Heart right ventricle (tissue), 16 donors: ENCODE measurements at regions of chr11 and their contacts with region 1.

Region 1: DNA sequence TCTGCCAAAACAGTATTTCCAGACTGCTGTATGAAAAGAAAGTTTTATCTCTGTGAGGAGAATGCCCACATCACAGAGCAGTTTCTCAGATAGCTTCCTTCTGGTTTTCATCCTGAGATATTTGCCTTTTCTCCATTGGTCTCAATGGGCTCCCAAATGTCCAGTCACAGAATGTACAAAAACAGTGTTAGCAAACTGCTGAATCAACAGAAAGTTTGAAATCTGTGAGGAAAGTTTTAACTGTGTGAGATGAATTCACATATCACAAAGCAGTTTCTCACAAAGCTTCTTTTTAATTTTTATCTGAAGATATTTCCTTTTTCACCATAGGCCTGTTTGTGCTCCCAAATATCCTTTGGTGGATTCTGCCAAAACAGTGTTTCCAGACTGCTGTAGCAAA is 207.2 kb upstream of the TRIM48 start:
- DNase-seq: no peak
- ATAC-seq: no peak
- H3K4me3 ChIP-seq: no peak overlapping the region
- H3K27ac ChIP-seq: no peak overlapping the region
- H3K4me1 ChIP-seq: no peaks in the 10 kb centered on the region
- H3K27me3 ChIP-seq: no peaks in the 10 kb centered on the region
- CTCF ChIP-seq: no peak

Region 2: DNA sequence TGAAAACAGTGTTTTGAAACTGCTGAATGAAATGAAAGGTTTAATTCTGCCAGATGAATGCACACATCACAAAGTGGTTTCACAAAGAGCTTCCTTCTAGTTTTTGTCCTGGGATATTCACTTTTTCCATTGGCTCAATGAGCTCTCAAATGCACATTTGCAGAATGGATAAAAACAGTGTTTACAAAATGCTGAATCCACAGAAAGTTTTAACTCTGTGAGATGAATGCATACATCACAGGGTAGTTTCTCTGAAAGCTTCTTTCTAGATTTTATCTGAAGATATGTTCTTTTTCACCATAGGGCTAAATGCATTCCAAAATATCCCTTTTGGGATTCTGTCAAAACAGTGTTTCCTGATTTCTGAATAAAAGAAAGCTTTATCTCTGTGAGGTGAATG is 110.5 kb before region 1 on chr11:
- intact Hi-C with region 1: no loop called
- DNase-seq: no peak
- ATAC-seq: no peak
- H3K4me3 ChIP-seq: no peak overlapping the region
- H3K27ac ChIP-seq: no peak overlapping the region
- H3K4me1 ChIP-seq: no peaks in the 10 kb centered on the region
- H3K27me3 ChIP-seq: no peaks in the 10 kb centered on the region
- CTCF ChIP-seq: no peak

Region 3: GRCh38 chr11:56394381-56394780 is 1339.7 kb after region 1 on chr11:
- intact Hi-C with region 1: loop called in 1 of 10 experiments (anchors 5 kb)
- DNase-seq: no peak
- ATAC-seq: no peak
- H3K4me3 ChIP-seq: no peak overlapping the region
- H3K27ac ChIP-seq: no peak overlapping the region
- H3K4me1 ChIP-seq: no peaks in the 10 kb centered on the region
- H3K27me3 ChIP-seq: no peaks in the 10 kb centered on the region
- CTCF ChIP-seq: no peak